ENCODE measurements at regions of chr5 and their contacts with region 1.

Region 1: GRCh38 chr5:82364497-82364896 is 86.3 kb upstream of the RPS23 start:
- DNase-seq: peak; percentile 80
- H3K4me3 ChIP-seq: no peak overlapping the region
- H3K27ac ChIP-seq: no peak overlapping the region
- H3K4me1 ChIP-seq: peaks cover 9% of the 10 kb centered on the region
- H3K27me3 ChIP-seq: no peaks in the 10 kb centered on the region
- CTCF ChIP-seq: peak; percentile 55 to 58
- POLR2A ChIP-seq: no peak

Region 2: DNA sequence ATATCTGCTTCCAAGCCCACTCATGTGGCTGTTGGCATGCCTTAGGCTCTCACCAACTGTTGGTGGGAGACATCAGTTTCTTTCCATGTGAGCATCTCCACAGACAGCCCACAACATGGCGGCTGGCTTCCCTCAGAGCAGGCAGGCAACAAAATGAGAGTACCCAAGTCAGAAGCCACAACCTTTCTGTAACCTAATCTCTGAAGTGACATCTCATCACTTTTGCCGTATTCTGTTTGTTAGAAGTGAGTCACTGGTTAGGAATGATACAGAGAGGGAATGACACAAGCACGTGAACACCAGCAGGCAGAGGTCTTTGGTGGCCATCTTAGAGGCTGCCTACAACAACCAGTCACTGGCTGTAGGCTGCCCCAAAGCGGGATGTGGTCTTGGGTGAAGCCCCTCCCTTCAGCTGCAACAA is 1492.9 kb before region 1 on chr5:
- CTCF ChIA-PET with region 1: no interaction called
- POLR2A ChIA-PET with region 1: no interaction called
- dilution Hi-C with region 1: no loop called
- intact Hi-C with region 1: no loop called
- DNase-seq: no peak
- H3K4me3 ChIP-seq: no peak overlapping the region
- H3K27ac ChIP-seq: no peak overlapping the region
- H3K4me1 ChIP-seq: no peaks in the 10 kb centered on the region
- H3K27me3 ChIP-seq: no peaks in the 10 kb centered on the region
- CTCF ChIP-seq: no peak
- POLR2A ChIP-seq: no peak

Region 3: GRCh38 chr5:82312373-82312856 is 52.1 kb before region 1 on chr5:
- CTCF ChIA-PET with region 1: interaction called, 10 read pairs
- POLR2A ChIA-PET with region 1: no interaction called
- dilution Hi-C with region 1: no loop called
- intact Hi-C with region 1: no loop called
- DNase-seq: peak; percentile 63
- H3K4me3 ChIP-seq: no peak overlapping the region
- H3K27ac ChIP-seq: no peak overlapping the region
- H3K4me1 ChIP-seq: peaks cover 7% of the 10 kb centered on the region
- H3K27me3 ChIP-seq: peaks cover 3 to 4% of the 10 kb centered on the region in 2 experiments
- CTCF ChIP-seq: peak; percentile 77 to 90
- POLR2A ChIP-seq: no peak

Region 4: GRCh38 chr5:82387001-82387818 is 22.7 kb after region 1 on chr5:
- CTCF ChIA-PET with region 1: interaction called, 14 read pairs
- POLR2A ChIA-PET with region 1: no interaction called
- dilution Hi-C with region 1: no loop called
- intact Hi-C with region 1: no loop called
- DNase-seq: peak; percentile 99
- H3K4me3 ChIP-seq: no peak overlapping the region
- H3K27ac ChIP-seq: peak overlapping the region; percentile 59
- H3K4me1 ChIP-seq: peaks cover 39% of the 10 kb centered on the region
- H3K27me3 ChIP-seq: no peaks in the 10 kb centered on the region
- CTCF ChIP-seq: no peak
- POLR2A ChIP-seq: no peak

Region 5: DNA sequence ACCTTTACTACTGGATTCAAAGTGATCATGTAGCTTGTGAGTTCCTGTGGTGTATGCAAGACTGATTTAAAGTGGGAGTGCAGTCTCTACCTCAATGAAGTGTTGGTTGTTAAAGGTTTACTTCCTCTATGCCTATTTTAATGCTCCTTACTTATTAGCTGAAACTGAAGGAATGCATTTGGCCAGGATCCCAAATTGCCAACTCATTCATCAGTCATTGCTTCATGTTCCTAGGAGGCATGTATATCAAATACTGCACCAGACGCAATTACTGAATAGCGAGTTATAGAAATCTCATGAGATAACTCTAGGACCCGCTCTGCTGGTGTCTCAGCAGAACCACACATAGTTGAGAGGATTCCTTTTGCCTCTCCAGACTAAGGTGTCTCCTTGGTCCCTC is 56.6 kb after region 1 on chr5:
- CTCF ChIA-PET with region 1: interaction called, 31 read pairs
- POLR2A ChIA-PET with region 1: no interaction called
- dilution Hi-C with region 1: no loop called
- intact Hi-C with region 1: loop called (anchors 1 kb)
- DNase-seq: peak; percentile 89
- H3K4me3 ChIP-seq: no peak overlapping the region
- H3K27ac ChIP-seq: no peak overlapping the region
- H3K4me1 ChIP-seq: peaks cover 11% of the 10 kb centered on the region
- H3K27me3 ChIP-seq: no peaks in the 10 kb centered on the region
- CTCF ChIP-seq: peak in 1 of 2 donors; percentile 10
- POLR2A ChIP-seq: no peak

Region 6: DNA sequence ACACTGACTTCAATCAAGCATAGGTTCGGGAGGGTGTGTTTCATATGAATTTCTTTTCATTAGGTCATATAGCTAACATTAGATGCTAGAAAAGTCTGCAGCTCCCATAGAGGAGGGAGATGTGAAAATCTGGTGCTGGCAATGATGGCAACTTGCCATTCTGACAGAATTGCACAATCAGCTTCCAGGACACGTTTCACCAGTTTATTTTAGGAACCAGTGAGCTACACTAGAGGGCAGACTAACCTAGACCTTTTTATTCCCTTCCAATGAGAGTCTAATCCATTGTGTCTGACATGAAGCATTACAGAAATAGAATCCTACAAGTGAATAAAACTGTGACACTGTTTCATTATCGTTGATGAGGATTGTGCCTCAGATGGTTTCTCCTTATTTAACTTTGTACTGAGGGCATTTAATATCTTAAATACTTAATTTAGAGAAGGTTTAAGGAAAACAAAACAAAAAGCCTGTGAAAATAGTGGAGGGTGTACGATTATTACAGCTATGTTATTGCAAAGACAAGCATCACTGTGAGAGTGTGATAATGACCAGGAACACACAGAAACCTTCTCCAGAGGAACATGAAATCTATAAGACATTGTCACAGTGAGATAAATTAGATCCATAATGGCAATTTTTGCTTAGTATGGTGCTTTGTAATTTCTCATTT is 277.0 kb after region 1 on chr5:
- CTCF ChIA-PET with region 1: interaction called, 33 read pairs
- POLR2A ChIA-PET with region 1: no interaction called
- dilution Hi-C with region 1: no loop called
- intact Hi-C with region 1: no loop called
- DNase-seq: peak; percentile 81
- H3K4me3 ChIP-seq: no peak overlapping the region
- H3K27ac ChIP-seq: no peak overlapping the region
- H3K4me1 ChIP-seq: no peaks in the 10 kb centered on the region
- H3K27me3 ChIP-seq: peaks cover 2% of the 10 kb centered on the region in 2 experiments
- CTCF ChIP-seq: peak; percentile 39 to 56
- POLR2A ChIP-seq: no peak

Region 7: DNA sequence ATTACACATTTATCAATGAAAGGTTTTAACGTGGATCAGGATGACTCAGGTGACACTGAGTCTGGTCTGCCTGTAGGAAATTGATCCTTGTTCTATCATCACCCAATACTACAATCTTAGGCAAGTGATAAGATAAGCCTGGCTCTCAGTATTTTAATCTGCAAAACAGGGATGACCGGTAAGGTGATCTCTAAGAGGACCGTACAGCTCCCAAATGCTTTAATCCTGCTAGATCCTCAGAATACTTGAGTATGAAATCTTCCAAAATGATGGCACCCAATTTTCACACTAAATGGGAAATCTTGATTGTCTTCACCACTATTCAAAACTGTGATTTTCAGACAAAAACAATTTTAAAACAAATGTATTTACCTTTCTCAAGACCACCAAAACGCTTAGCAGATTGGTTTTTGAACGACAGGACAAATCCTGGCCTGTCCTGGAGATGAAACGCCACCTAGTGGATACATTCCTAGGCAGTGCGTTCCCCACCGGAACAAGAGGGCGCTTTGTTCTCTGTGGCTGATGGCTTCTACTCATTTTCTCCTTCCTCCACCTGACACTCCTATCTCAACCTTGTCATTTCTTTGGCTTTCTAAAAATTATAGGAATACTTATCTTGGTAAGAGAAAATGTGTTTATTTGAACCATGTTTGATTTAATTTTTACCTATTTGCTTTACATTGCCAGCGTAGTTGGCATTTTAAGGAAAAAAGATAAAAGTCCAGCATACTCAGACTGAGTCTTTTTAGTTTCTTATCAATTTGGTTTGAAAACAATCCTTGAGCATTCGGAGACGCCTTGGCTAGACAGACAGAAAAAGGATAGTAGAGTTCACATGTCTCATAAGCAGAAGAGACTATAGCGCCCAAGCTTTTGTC is 1065.9 kb after region 1 on chr5:
- CTCF ChIA-PET with region 1: interaction called, 34 read pairs
- POLR2A ChIA-PET with region 1: no interaction called
- dilution Hi-C with region 1: no loop called
- intact Hi-C with region 1: loop called (anchors 1 kb)
- DNase-seq: peak; percentile 67
- H3K4me3 ChIP-seq: no peak overlapping the region
- H3K27ac ChIP-seq: no peak overlapping the region
- H3K4me1 ChIP-seq: no peaks in the 10 kb centered on the region
- H3K27me3 ChIP-seq: peaks cover 5 to 8% of the 10 kb centered on the region in 2 experiments
- CTCF ChIP-seq: peak; percentile 89 to 96
- POLR2A ChIP-seq: no peak

Region 8: DNA sequence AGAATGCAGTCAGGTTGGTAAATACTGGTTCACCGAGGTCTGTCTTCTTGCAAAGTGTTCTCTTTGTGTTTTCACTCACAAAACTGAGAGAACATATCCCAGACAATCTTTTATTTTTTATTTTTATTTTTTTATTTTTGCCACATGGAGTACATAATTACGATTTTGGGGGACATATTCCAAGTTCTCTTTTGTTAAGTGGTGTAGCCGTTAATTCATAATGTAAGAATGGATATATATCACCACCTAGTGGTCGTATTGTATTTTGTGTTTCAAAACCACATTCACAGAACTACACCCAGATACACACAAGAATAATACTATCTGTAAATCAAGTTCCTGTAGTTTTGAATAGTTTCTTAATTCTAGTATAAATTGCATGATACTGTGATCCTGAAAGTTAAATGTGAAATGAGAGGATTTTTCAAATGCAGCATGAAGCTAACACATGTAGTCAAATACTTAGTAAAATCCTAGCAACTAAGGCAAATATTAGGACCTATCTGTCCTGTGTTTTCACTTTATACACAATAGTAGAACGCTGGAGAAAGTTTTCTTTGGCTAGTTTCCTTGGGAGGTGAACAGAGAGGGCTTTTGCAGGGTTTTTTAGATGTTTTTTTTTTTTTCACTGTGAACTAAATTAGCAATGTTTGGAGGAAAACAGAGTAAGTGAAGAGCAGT is 1199.7 kb after region 1 on chr5:
- CTCF ChIA-PET with region 1: interaction called, 23 read pairs
- POLR2A ChIA-PET with region 1: no interaction called
- dilution Hi-C with region 1: no loop called
- intact Hi-C with region 1: loop called (anchors 1 kb)
- DNase-seq: peak; percentile 81
- H3K4me3 ChIP-seq: no peak overlapping the region
- H3K27ac ChIP-seq: no peak overlapping the region
- H3K4me1 ChIP-seq: peaks cover 4% of the 10 kb centered on the region
- H3K27me3 ChIP-seq: peaks cover 0 to 8% of the 10 kb centered on the region in 2 experiments
- CTCF ChIP-seq: peak; percentile 16 to 24
- POLR2A ChIP-seq: no peak

Measured in endothelial cell of umbilical vein (primary cell).